Activated T-helper 1 cell treated with anti-CD3 and anti-CD28 coated beads, Interleukin-12 subunit alpha, Interleukin-12 subunit beta, Interleukin-2, Interleukin-4 antibody, amounts not matched to agents 30 ng/mL and 10 ng/mL and 1 ng/mL, durations not matched to agents 14 hours and 24 hours and 36 hours (primary cell): ENCODE measurements at regions of chr2 and their contacts with region 1.

Region 1: DNA sequence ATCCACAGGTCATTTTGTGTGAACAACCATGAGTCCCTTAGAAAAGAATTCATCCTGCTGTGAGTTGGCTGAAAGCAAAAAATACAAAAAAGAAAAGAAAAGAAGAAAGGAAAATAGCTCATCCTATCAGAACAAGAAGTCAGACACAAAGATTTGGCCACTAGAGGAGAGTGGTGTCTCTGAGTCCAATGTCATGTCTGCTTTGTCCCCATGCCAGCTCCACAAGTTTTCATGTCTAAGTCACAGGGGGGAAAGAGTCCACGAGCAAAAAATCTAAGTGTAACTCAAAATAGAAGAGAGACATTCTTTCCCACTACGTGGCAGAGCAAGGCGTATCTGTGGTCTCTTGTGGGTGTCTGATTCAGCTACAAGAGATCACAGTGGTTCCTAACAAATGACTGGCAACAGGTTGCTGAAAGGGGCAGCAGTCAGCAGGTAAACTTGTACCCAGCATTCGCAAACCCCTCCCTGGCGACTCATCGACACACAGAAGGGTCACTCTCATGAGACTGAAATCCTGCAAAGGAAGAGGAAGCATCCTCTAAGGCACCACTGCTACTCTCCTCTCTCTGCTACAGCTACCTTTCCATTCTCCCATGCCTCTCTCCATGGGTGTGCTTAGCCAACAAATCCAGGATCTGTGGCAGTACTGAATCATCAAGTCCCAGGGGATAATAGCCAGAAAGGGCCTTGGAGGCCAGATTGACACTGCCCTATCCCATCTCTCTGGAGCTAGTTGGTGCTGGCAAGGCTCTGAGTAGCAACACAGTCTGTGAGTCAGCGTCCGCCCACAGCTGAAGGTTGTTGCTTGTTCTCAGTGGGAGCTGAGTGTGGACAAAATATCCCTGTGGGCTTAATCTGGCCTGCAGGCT is 123.0 kb upstream of the SLC39A10 start:
- DNase-seq: peak; percentile 60
- H3K4me3 Mint-ChIP-seq: peak overlapping the region; percentile 82
- H3K27ac Mint-ChIP-seq: peak overlapping the region; percentile 96
- H3K4me1 Mint-ChIP-seq: peaks cover 86% of the 10 kb centered on the region
- H3K27me3 Mint-ChIP-seq: no peaks in the 10 kb centered on the region

Region 2: GRCh38 chr2:194464964-194465638 is 1068.9 kb before region 1 on chr2:
- intact Hi-C with region 1: loop called (anchors 10 kb)
- DNase-seq: no peak
- H3K4me3 Mint-ChIP-seq: no peak overlapping the region
- H3K27ac Mint-ChIP-seq: no peak overlapping the region
- H3K4me1 Mint-ChIP-seq: no peaks in the 10 kb centered on the region
- H3K27me3 Mint-ChIP-seq: no peaks in the 10 kb centered on the region

Region 3: GRCh38 chr2:195477248-195477995 is 56.6 kb before region 1 on chr2:
- intact Hi-C with region 1: loop called (anchors 1 kb)
- DNase-seq: no peak
- H3K4me3 Mint-ChIP-seq: peak overlapping the region; percentile 0
- H3K27ac Mint-ChIP-seq: peak overlapping the region; percentile 59
- H3K4me1 Mint-ChIP-seq: peaks cover 53% of the 10 kb centered on the region
- H3K27me3 Mint-ChIP-seq: no peaks in the 10 kb centered on the region

Region 4: DNA sequence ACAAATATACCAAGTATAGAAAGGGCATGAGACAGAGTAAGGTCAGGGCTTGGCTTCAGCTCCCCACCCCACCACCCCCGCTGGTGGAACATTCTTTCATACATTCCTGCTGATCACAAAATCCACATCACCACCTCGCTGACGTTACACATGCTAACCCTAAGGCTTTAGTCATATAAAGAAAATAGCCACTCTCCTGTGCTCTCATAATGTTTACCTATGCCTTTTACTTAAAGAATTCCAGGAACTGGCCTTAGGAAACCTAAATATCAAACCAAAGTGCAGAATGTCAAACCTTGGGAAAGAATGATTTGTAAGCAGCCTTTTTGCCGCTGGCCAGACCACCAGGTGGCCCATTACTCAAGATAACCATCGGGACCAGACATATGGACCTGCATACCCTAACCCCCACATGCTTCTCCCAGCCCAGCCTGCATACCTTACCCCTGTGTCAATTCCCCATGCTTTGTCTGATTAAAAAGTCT is 13.3 kb before region 1 on chr2:
- intact Hi-C with region 1: no loop called
- DNase-seq: no peak
- H3K4me3 Mint-ChIP-seq: no peak overlapping the region
- H3K27ac Mint-ChIP-seq: no peak overlapping the region
- H3K4me1 Mint-ChIP-seq: peaks cover 30% of the 10 kb centered on the region
- H3K27me3 Mint-ChIP-seq: no peaks in the 10 kb centered on the region

Region 5: DNA sequence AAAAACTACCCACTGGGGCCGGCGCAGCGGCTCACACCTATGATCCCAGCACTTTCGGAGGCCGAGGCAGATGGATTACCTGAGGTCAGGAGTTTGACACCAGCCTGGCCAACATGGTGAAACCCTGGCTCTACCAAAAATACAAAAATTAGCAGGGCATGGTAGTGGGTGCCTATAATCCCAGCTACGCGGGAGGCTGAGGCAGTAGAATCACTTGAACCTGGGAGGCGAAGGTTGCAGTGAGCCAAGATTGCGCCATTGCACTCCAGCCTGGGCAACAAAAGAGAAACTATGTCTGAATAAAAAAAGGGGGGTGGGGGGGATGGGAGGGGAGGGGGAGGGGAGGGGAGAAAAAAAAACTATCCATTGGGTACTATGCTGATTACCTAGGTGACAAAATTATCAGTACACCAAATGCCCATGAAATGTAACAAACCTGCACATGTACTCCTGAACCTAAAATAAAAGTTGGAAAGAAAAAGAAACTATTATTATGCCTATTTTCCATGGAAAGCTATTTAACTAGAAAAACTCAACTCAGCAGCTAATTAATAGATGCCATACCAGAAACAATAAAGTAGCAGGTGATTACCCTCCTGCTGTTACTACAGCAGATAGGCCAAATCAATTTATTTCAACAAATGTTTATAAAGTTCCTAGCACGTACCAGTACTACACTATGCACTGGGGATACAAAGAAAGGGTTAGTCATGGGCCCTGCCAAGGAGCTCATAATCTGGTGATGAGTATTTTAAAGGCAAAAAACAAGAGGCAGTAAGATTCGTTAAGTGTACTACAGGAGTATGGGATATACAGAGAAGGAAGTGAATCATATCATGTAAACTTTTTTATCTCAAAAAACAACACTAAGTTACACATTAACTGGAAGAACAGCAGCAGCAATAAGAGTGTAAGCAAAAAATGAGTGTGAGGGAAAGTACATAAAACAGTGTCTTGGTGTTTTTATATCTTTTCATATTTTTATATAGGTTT is 10.2 kb after region 1 on chr2:
- intact Hi-C with region 1: loop called (anchors 1 kb)
- DNase-seq: no peak
- H3K4me3 Mint-ChIP-seq: peak overlapping the region; percentile 32
- H3K27ac Mint-ChIP-seq: peak overlapping the region; percentile 88
- H3K4me1 Mint-ChIP-seq: peaks cover 83% of the 10 kb centered on the region
- H3K27me3 Mint-ChIP-seq: no peaks in the 10 kb centered on the region

Region 6: GRCh38 chr2:195575879-195576401 is 41.9 kb after region 1 on chr2:
- intact Hi-C with region 1: loop called (anchors 1 kb)
- DNase-seq: no peak
- H3K4me3 Mint-ChIP-seq: no peak overlapping the region
- H3K27ac Mint-ChIP-seq: peak overlapping the region; percentile 13
- H3K4me1 Mint-ChIP-seq: peaks cover 58% of the 10 kb centered on the region
- H3K27me3 Mint-ChIP-seq: no peaks in the 10 kb centered on the region